ENCODE measurements at regions of chr16 and their contacts with region 1.

Region 1: DNA sequence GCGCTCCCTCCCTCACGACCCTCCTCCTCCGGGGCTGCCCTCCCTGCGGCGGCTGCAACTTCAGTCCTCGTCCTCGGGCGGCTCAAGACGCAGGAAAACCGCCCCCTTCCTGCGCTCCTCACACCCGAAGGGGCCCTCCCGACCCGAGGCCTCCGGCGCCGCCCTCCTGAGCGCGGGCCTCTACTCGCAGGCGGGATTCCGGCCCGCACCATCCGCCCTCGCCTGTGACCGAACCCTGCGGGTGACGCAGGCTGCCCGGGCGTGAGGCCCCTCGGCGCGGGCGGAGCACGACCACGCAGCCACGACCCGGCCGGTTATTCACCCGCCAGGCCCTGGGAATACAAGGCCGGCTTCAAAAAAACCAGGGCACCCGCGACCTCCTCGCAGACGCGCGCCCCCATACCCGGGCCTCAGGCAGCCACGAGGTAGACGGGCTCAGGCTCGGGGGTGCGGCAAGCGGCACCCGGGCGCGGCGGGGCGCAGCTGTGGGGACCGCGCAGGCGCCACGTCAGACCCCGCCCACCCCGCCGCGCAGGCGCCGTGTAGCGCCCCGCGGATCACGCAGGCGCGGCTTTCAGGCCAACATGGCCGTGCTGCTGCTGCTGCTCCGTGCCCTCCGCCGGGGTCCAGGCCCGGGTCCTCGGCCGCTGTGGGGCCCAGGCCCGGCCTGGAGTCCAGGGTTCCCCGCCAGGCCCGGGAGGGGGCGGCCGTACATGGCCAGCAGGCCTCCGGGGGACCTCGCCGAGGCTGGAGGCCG is at the start of gene SPG7:
- DNase-seq: peak; percentile 93
- H3K4me3 Mint-ChIP-seq: peak within 1 kb of the TSS; percentile 94
- H3K27ac Mint-ChIP-seq: peak within 1 kb of the TSS; percentile 94
- H3K4me1 Mint-ChIP-seq: peaks cover 25% of the 10 kb centered on the region
- H3K27me3 Mint-ChIP-seq: no peaks in the 10 kb centered on the region
- total RNA-seq, gene SPG7: 67.9 to 70.4 TPM

Region 2: DNA sequence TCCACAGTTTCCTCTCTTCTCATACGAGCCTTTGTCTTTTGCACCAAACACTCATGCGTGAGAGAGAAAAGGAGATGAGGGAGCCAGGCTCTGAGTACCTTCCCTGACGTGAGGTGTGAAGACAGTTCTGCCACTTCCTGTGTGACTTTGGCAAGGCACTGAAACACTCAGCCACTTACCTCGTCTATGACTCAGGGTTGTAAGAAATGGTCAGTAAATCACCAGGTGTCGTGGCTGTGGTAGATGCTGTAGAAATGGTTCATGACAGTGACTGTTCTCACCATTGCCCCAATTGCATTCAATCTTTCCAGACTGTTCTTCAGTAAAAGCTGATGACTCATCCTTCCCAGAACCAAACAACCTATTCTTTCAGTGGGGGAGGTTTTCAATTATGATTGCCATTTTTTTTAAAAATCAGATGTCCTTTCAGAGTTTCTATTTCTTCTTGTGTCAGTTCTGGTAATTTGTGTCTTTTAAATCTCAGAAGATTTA is 481.8 kb before region 1 on chr16:
- CTCF ChIA-PET with region 1: no interaction called
- POLR2A ChIA-PET with region 1: no interaction called
- intact Hi-C with region 1: loop called (anchors 10 kb)
- DNase-seq: peak; percentile 81
- H3K4me3 Mint-ChIP-seq: no peak overlapping the region
- H3K27ac Mint-ChIP-seq: peak overlapping the region; percentile 89
- H3K4me1 Mint-ChIP-seq: peaks cover 23% of the 10 kb centered on the region
- H3K27me3 Mint-ChIP-seq: no peaks in the 10 kb centered on the region

Region 3: DNA sequence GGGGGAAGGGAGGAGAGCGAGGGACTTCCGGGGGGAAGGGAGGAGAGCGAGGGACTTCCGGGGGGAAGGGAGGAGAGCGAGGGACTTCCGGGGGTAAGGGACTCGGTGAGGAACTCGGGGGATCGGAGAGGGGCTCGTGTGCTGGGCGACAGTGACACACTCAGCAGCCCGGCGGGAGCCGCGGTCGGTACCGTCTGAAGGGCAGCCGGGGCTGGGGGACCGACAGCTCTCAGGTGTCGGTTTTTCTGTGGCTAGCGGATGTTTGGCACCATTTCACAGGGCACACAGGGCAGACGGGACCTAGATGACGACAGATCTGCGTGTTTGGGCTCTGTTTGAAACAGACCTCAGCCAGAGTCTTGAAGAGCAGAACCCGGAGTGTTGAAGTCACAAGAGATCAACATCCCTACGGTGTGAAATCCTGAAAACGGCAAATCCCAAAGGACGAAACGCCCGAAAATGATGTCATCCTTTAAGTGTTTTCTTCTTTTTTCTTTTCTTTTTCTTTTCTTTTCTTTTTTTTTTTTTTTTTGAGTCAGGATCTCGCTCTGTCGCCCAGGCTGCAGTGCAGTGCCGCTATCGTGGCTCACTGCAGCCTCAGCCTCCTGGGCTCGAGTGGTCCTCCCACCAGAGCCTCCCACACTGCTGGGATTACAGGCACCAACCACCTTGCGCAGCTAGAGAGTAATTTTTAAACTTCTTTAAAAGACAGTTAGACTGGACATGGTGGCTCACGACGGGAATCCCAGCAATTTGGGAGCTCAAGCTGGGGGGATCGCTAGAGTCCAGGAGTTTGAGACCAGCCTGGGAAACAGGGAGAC is 266.6 kb before region 1 on chr16:
- CTCF ChIA-PET with region 1: interaction called, 18 read pairs
- POLR2A ChIA-PET with region 1: interaction called, 5 read pairs
- intact Hi-C with region 1: loop called (anchors 2 kb)
- DNase-seq: peak; percentile 86
- H3K4me3 Mint-ChIP-seq: peak overlapping the region; percentile 97
- H3K27ac Mint-ChIP-seq: peak overlapping the region; percentile 96
- H3K4me1 Mint-ChIP-seq: peaks cover 4% of the 10 kb centered on the region
- H3K27me3 Mint-ChIP-seq: no peaks in the 10 kb centered on the region

Region 4: GRCh38 chr16:89319883-89320781 is 187.9 kb before region 1 on chr16:
- CTCF ChIA-PET with region 1: interaction called, 19 read pairs
- POLR2A ChIA-PET with region 1: interaction called, 4 read pairs
- intact Hi-C with region 1: loop called (anchors 2 kb)
- DNase-seq: peak; percentile 74
- H3K4me3 Mint-ChIP-seq: peak overlapping the region; percentile 21
- H3K27ac Mint-ChIP-seq: peak overlapping the region; percentile 76
- H3K4me1 Mint-ChIP-seq: peaks cover 96% of the 10 kb centered on the region
- H3K27me3 Mint-ChIP-seq: no peaks in the 10 kb centered on the region

Region 5: GRCh38 chr16:89325861-89326471 is 182.0 kb before region 1 on chr16:
- CTCF ChIA-PET with region 1: interaction called, 3 read pairs
- POLR2A ChIA-PET with region 1: interaction called, 4 read pairs
- intact Hi-C with region 1: loop called (anchors 2 kb)
- DNase-seq: peak; percentile 48
- H3K4me3 Mint-ChIP-seq: no peak overlapping the region
- H3K27ac Mint-ChIP-seq: peak overlapping the region; percentile 46
- H3K4me1 Mint-ChIP-seq: peaks cover 87% of the 10 kb centered on the region
- H3K27me3 Mint-ChIP-seq: no peaks in the 10 kb centered on the region

Region 6: GRCh38 chr16:89331371-89332109 is 176.5 kb before region 1 on chr16:
- CTCF ChIA-PET with region 1: interaction called, 5 read pairs
- POLR2A ChIA-PET with region 1: no interaction called
- intact Hi-C with region 1: loop called (anchors 1 kb)
- DNase-seq: no peak
- H3K4me3 Mint-ChIP-seq: no peak overlapping the region
- H3K27ac Mint-ChIP-seq: peak overlapping the region; percentile 39
- H3K4me1 Mint-ChIP-seq: peaks cover 84% of the 10 kb centered on the region
- H3K27me3 Mint-ChIP-seq: no peaks in the 10 kb centered on the region

Region 7: DNA sequence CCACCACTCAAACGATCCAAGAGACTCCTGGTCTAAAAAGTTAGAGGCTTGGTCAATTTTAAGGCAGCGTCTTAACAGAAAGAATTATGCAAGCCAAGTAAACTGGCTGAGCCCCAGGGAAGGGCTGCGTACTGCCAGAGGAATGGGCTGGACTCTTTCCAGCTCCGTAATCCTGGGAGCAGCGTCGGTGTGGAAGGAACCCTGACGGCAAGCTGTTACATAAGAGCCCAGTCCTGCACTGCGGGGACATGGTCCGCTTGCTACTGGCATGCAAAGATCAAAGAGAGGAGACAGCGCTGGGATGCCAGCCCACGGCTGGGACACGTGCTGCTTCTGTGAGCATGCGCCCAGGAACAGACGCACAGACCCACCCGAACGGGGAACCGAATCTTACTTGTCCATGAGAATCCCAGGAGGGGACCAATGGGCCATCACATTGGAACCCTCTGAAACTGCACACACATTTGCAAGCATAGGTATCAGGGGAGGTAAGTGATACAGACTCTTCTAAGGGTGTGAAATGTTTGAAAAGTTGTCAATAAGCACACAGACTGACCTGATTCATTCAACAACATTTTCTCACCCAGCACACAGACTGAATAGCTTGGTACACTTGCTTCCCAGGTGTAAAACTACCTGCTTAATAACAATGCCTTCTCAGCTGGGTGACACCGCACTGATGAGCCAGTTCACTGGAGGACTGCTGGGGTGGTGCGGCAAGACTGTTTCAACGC is 112.7 kb before region 1 on chr16:
- CTCF ChIA-PET with region 1: no interaction called
- POLR2A ChIA-PET with region 1: no interaction called
- intact Hi-C with region 1: no loop called
- DNase-seq: no peak
- H3K4me3 Mint-ChIP-seq: no peak overlapping the region
- H3K27ac Mint-ChIP-seq: no peak overlapping the region
- H3K4me1 Mint-ChIP-seq: peaks cover 63% of the 10 kb centered on the region
- H3K27me3 Mint-ChIP-seq: no peaks in the 10 kb centered on the region

Region 8: GRCh38 chr16:89525146-89525913 is 17.3 kb after region 1 on chr16:
- CTCF ChIA-PET with region 1: no interaction called
- POLR2A ChIA-PET with region 1: no interaction called
- intact Hi-C with region 1: no loop called
- DNase-seq: no peak
- H3K4me3 Mint-ChIP-seq: no peak overlapping the region
- H3K27ac Mint-ChIP-seq: no peak overlapping the region
- H3K4me1 Mint-ChIP-seq: no peaks in the 10 kb centered on the region
- H3K27me3 Mint-ChIP-seq: no peaks in the 10 kb centered on the region